ENCODE measurements at regions of chr10 and their contacts with region 1.

Region 1: GRCh38 chr10:13074561-13075451 is 25.2 kb upstream of the OPTN start:
- DNase-seq: no peak
- ATAC-seq: peak; percentile 96
- H3K4me3 ChIP-seq: no peak overlapping the region
- H3K27ac ChIP-seq: no peak overlapping the region
- H3K4me1 ChIP-seq: no peaks in the 10 kb centered on the region
- H3K27me3 ChIP-seq: no peaks in the 10 kb centered on the region
- CTCF ChIP-seq: peak; percentile 89

Region 2: DNA sequence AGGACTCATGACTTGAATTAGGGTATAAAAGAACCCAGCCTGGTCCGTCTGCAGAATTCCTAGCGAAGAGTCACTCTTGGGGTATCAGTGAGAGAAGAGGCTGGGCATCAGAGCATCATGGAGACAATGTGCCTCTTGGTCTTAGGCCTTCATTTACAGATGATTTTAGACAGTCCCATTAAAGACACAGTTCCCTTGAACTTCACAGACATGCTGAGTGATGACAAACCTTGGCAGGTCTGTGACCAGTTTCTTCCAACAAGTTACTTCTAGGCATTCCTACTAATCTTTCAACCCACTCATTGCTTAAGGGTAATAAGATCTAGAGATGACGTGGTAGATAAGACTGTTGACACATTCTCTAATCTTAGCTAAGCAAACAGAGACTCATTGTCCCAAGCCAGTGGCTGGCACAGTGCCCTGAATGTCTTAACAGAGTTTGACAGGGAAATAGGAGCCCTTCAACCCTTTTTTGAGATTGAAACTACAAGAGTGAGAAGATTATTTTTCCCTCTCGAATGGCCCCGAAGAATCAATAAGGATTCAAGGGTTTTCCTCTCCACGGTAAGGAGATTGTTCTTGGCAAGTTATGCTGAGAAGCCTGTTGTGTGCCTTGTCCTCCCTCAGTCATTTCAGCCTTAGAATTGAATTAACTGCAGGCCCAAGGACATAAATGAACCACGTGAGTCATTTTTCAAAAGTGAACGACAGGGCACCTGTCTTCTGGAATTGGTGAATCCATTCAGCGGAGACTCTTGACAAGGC is 354.4 kb before region 1 on chr10:
- CTCF ChIA-PET with region 1: no interaction called
- POLR2A ChIA-PET with region 1: no interaction called
- in situ Hi-C with region 1: no loop called
- intact Hi-C with region 1: loop called (anchors 5 kb)
- DNase-seq: no peak
- ATAC-seq: peak; percentile 93
- H3K4me3 ChIP-seq: no peak overlapping the region
- H3K27ac ChIP-seq: no peak overlapping the region
- H3K4me1 ChIP-seq: peaks cover 6% of the 10 kb centered on the region
- H3K27me3 ChIP-seq: no peaks in the 10 kb centered on the region
- CTCF ChIP-seq: no peak

Region 3: DNA sequence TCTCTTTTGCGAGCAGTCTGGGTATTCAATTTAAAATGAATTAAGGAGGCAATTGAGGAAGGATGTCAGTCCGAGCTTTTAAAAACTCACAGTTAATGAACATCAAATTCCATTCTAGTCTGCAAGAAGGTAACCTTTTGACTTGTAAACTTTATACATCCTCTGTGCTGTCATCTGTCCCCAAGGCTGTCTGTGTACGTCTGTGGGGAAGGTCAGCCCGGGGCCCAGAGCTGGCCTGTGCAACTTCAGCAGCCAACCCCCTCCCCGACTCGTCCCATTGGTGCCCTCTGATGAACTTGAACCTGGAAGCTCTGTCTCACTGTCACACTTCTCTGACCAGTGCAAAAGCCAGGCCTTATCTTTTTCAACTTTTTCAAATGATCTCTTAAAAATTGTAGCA is 153.6 kb before region 1 on chr10:
- CTCF ChIA-PET with region 1: no interaction called
- POLR2A ChIA-PET with region 1: no interaction called
- in situ Hi-C with region 1: no loop called
- intact Hi-C with region 1: loop called (anchors 10 kb)
- DNase-seq: no peak
- ATAC-seq: no peak
- H3K4me3 ChIP-seq: no peak overlapping the region
- H3K27ac ChIP-seq: no peak overlapping the region
- H3K4me1 ChIP-seq: no peaks in the 10 kb centered on the region
- H3K27me3 ChIP-seq: no peaks in the 10 kb centered on the region
- CTCF ChIP-seq: no peak

Region 4: GRCh38 chr10:13099666-13100348 is 25.0 kb after region 1 on chr10 and contains the start of gene OPTN:
- CTCF ChIA-PET with region 1: no interaction called
- POLR2A ChIA-PET with region 1: no interaction called
- in situ Hi-C with region 1: no loop called
- intact Hi-C with region 1: no loop called
- DNase-seq: peak; percentile 48
- ATAC-seq: peak; percentile 92
- H3K4me3 ChIP-seq: peak within 1 kb of the TSS; percentile 68 to 88
- H3K27ac ChIP-seq: peak within 1 kb of the TSS; percentile 85
- H3K4me1 ChIP-seq: peaks cover 7% of the 10 kb centered on the region
- H3K27me3 ChIP-seq: no peaks in the 10 kb centered on the region
- CTCF ChIP-seq: peak; percentile 79
- total RNA-seq, gene OPTN: 66.8 TPM

Measured in Panc1 (cell line).